ENCODE measurements at regions of chr11 and their contacts with region 1.

Region 1: GRCh38 chr11:105044921-105045524 is at the start of gene CARD16:
- DNase-seq: peak; percentile 74
- H3K4me3 ChIP-seq: peak within 1 kb of the TSS; percentile 36 to 83 (median 62)
- H3K27ac ChIP-seq: peak within 1 kb of the TSS; percentile 88
- H3K4me1 ChIP-seq: peaks cover 41% of the 10 kb centered on the region
- H3K27me3 ChIP-seq: no peaks in the 10 kb centered on the region
- CTCF ChIP-seq: no peak
- POLR2A ChIP-seq: no peak
- total RNA-seq, gene CARD16: 68.7 and 76.6 TPM in 2 replicates

Region 2: GRCh38 chr11:104946907-104947306 is 98.1 kb before region 1 on chr11:
- CTCF ChIA-PET with region 1: interaction called, 4 read pairs
- POLR2A ChIA-PET with region 1: no interaction called
- dilution Hi-C with region 1: no loop called
- intact Hi-C with region 1: loop called (anchors 1 kb)
- DNase-seq: peak; percentile 74
- H3K4me3 ChIP-seq: no peak overlapping the region
- H3K27ac ChIP-seq: no peak overlapping the region
- H3K4me1 ChIP-seq: no peaks in the 10 kb centered on the region
- H3K27me3 ChIP-seq: no peaks in the 10 kb centered on the region
- CTCF ChIP-seq: peak; percentile 33 to 35
- POLR2A ChIP-seq: no peak

Region 3: GRCh38 chr11:105073456-105074165 is 28.6 kb after region 1 on chr11:
- CTCF ChIA-PET with region 1: no interaction called
- POLR2A ChIA-PET with region 1: no interaction called
- dilution Hi-C with region 1: no loop called
- intact Hi-C with region 1: loop called (anchors 1 kb)
- DNase-seq: peak; percentile 79
- H3K4me3 ChIP-seq: no peak overlapping the region
- H3K27ac ChIP-seq: peak overlapping the region; percentile 59
- H3K4me1 ChIP-seq: peaks cover 11% of the 10 kb centered on the region
- H3K27me3 ChIP-seq: no peaks in the 10 kb centered on the region
- CTCF ChIP-seq: no peak
- POLR2A ChIP-seq: no peak

Region 4: GRCh38 chr11:105144887-105145286 is 99.9 kb after region 1 on chr11:
- CTCF ChIA-PET with region 1: interaction called, 3 read pairs
- POLR2A ChIA-PET with region 1: no interaction called
- dilution Hi-C with region 1: no loop called
- intact Hi-C with region 1: loop called (anchors 2 kb)
- DNase-seq: peak; percentile 36
- H3K4me3 ChIP-seq: no peak overlapping the region
- H3K27ac ChIP-seq: no peak overlapping the region
- H3K4me1 ChIP-seq: peaks cover 22% of the 10 kb centered on the region
- H3K27me3 ChIP-seq: no peaks in the 10 kb centered on the region
- CTCF ChIP-seq: no peak
- POLR2A ChIP-seq: no peak

Region 5: GRCh38 chr11:105368711-105369110 is 323.7 kb after region 1 on chr11:
- CTCF ChIA-PET with region 1: no interaction called
- POLR2A ChIA-PET with region 1: no interaction called
- dilution Hi-C with region 1: no loop called
- intact Hi-C with region 1: no loop called
- DNase-seq: no peak
- H3K4me3 ChIP-seq: no peak overlapping the region
- H3K27ac ChIP-seq: no peak overlapping the region
- H3K4me1 ChIP-seq: peaks cover 2% of the 10 kb centered on the region
- H3K27me3 ChIP-seq: no peaks in the 10 kb centered on the region
- CTCF ChIP-seq: no peak
- POLR2A ChIP-seq: no peak

Region 6: DNA sequence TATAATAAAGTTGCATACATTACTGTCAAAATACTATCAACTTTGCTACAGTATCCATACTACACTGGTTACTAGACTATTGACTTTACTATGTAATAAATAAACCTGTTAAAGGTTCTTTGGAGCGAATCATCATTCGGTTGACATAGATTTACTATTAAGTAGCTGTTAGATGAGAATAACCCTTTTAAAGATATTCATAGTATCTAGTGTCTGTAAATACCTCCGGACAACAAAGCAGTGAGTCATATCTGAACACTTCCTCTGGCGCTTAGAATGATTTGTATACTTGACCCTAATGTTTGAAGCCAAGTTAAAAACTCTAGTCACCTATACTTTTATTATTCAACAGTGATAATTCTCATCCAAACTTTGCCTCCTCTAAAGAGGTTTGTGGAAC is 892.3 kb after region 1 on chr11:
- CTCF ChIA-PET with region 1: no interaction called
- POLR2A ChIA-PET with region 1: no interaction called
- dilution Hi-C with region 1: no loop called
- intact Hi-C with region 1: loop called (anchors 5 kb)
- DNase-seq: no peak
- H3K4me3 ChIP-seq: no peak overlapping the region
- H3K27ac ChIP-seq: peak overlapping the region; percentile 22
- H3K4me1 ChIP-seq: peaks cover 32% of the 10 kb centered on the region
- H3K27me3 ChIP-seq: peaks cover 0 to 7% of the 10 kb centered on the region in 2 experiments
- CTCF ChIP-seq: no peak
- POLR2A ChIP-seq: no peak

Measured in endothelial cell of umbilical vein (primary cell).